ENCODE measurements at regions of chr17 and their contacts with region 1.

Region 1: GRCh38 chr17:75877752-75878173 is 618 bp downstream of the TRIM47 start:
- DNase-seq: peak; percentile 78 to 88
- H3K4me3 ChIP-seq: peak overlapping the region; percentile 46
- H3K4me3 Mint-ChIP-seq: peak overlapping the region; percentile 70
- H3K27ac Mint-ChIP-seq: no peak overlapping the region
- H3K4me1 ChIP-seq: peaks cover 17% of the 10 kb centered on the region
- H3K4me1 Mint-ChIP-seq: peaks cover 12% of the 10 kb centered on the region
- H3K27me3 ChIP-seq: no peaks in the 10 kb centered on the region; the same call in 1 of the 2 replicates
- H3K27me3 Mint-ChIP-seq: no peaks in the 10 kb centered on the region
- CTCF ChIP-seq: peak; percentile 64 to 68

Region 2: DNA sequence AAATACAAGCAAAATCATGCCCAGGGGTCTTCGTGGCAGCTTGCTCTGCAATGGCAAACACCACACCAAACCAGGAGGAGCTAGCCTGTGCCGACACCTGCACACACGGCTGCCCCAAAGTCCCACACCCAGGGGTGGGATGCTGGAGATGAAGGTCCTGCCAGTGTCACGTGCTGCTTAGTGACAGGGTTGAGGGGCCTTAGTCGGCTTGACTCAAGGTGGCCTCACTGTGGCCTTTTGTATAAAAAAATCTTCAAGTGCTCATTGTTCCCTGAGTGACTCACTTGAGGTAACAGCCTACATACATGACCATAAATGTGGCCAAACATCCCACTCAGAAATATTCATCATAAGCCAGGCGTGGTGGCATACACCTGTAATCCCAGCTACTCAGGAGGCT is 11.7 kb after region 1 on chr17:
- CTCF ChIA-PET with region 1: interaction called, 12 read pairs
- POLR2A ChIA-PET with region 1: no interaction called
- intact Hi-C with region 1: no loop called
- DNase-seq: no peak
- H3K4me3 ChIP-seq: no peak overlapping the region
- H3K4me3 Mint-ChIP-seq: no peak overlapping the region
- H3K27ac Mint-ChIP-seq: no peak overlapping the region
- H3K4me1 ChIP-seq: 0 out of 2 replicates have a peak, but pooled peaks cover 5% of the 10 kb centered on the region
- H3K4me1 Mint-ChIP-seq: peaks cover 8% of the 10 kb centered on the region
- H3K27me3 ChIP-seq: no peaks in the 10 kb centered on the region
- H3K27me3 Mint-ChIP-seq: no peaks in the 10 kb centered on the region
- CTCF ChIP-seq: no peak